ENCODE measurements at regions of chr4 and their contacts with region 1.

Region 1: GRCh38 chr4:77240469-77241066 is 83.6 kb downstream of the CCNG2 start:
- DNase-seq: no peak
- H3K4me3 ChIP-seq: no peak overlapping the region
- H3K27me3 ChIP-seq: peaks cover 1% of the 10 kb centered on the region
- CTCF ChIP-seq: peak; percentile 79

Region 2: GRCh38 chr4:76677571-76678326 is 562.8 kb before region 1 on chr4:
- CTCF ChIA-PET with region 1: no interaction called
- POLR2A ChIA-PET with region 1: no interaction called
- DNase-seq: no peak
- H3K4me3 ChIP-seq: no peak overlapping the region
- H3K27me3 ChIP-seq: no peaks in the 10 kb centered on the region
- CTCF ChIP-seq: no peak

Region 3: DNA sequence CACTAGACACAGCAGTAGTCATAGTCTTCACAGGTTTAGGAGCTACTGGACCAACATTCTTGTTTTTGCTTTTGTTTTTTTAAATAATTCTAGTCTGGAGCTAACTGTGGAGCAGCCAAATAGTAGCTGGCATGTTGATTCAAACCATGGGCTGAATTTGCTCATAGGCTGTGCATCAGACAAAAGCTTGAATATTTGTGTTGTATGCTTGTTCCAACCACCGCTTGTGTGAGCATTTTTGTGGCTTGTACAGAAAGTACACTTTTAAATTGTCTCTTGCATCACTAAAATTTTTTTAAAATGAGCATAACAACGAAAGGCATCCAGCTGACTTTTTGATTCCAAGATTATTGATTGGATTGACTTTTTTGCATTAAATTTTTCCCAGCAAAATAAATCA is 204.4 kb before region 1 on chr4:
- CTCF ChIA-PET with region 1: no interaction called
- POLR2A ChIA-PET with region 1: no interaction called
- DNase-seq: peak; percentile 89
- H3K4me3 ChIP-seq: no peak overlapping the region
- H3K27me3 ChIP-seq: no peaks in the 10 kb centered on the region
- CTCF ChIP-seq: no peak

Region 4: GRCh38 chr4:77156533-77156911 is 84.0 kb before region 1 on chr4:
- CTCF ChIA-PET with region 1: no interaction called
- POLR2A ChIA-PET with region 1: no interaction called
- DNase-seq: peak; percentile 96
- H3K4me3 ChIP-seq: peak overlapping the region; percentile 100
- H3K27me3 ChIP-seq: peaks cover 4% of the 10 kb centered on the region
- CTCF ChIP-seq: no peak

Region 5: DNA sequence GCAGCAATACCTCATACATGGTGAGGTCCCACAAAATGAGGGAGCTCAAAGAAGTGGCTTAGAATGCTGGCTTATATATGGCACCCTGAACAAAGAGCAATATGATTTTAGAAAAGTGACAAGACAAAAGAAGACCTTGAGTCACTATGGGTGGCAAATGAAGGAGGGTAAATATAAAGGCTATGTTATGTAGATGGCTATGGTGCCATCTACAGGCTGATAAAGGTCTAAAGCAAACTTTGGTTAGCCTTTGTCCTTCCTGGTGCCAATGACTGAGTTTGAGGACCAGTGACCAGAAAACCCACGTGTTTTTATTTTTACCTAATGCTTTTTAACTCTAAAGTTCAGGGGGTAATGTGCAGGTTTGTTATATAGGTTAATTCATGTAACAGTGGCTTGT is 68.3 kb after region 1 on chr4:
- CTCF ChIA-PET with region 1: interaction called, 25 read pairs
- POLR2A ChIA-PET with region 1: no interaction called
- DNase-seq: no peak
- H3K4me3 ChIP-seq: no peak overlapping the region
- H3K27me3 ChIP-seq: peaks cover 2% of the 10 kb centered on the region; the same call in 1 of the 2 replicates
- CTCF ChIP-seq: peak; percentile 50

Region 6: DNA sequence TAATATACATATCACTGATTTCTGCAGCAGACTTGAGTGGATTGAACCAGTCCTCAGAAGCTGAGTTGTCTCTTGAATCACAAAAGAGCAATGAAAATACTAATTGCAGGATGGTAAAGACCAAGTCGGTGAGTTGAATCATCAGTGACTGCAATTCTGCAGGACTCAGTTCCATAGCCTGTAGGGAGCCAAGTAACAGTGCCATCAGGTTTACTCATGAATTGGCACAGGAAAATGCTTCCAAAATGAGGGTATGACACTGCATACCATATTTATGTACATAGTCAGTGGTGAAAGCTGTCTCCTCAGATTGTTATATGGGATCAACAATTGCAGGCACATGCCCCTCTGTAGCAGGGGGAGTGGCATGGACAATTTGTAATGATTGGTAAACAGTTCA is 109.2 kb after region 1 on chr4:
- CTCF ChIA-PET with region 1: interaction called, 14 read pairs
- POLR2A ChIA-PET with region 1: no interaction called
- DNase-seq: no peak
- H3K4me3 ChIP-seq: no peak overlapping the region
- H3K27me3 ChIP-seq: no peaks in the 10 kb centered on the region
- CTCF ChIP-seq: no peak

Region 7: GRCh38 chr4:77358315-77358928 is 117.9 kb after region 1 on chr4:
- CTCF ChIA-PET with region 1: interaction called, 164 read pairs
- POLR2A ChIA-PET with region 1: interaction called, 4 read pairs
- DNase-seq: no peak
- H3K4me3 ChIP-seq: no peak overlapping the region
- H3K27me3 ChIP-seq: peaks cover 4% of the 10 kb centered on the region
- CTCF ChIP-seq: peak; percentile 69

Region 8: DNA sequence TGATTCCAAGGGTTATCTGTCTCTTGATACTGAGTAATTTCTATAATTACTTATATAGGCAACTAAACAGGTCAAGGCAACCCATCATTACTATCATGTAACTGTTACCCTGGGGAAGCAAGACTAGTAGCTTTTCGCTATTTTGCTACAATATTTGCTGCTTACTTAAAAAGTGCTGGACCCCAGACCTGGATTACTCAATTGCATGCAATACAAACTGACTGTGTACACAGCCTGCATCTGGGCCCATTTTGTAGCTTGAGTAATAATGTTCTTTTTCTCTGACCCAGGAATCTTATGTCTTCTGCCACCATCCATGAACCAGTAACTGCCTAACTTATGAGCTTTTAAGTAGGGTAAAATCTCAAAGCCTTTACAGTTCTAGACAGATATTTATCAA is 525.2 kb after region 1 on chr4:
- CTCF ChIA-PET with region 1: no interaction called
- POLR2A ChIA-PET with region 1: no interaction called
- DNase-seq: no peak
- H3K4me3 ChIP-seq: no peak overlapping the region
- H3K27me3 ChIP-seq: no peaks in the 10 kb centered on the region
- CTCF ChIP-seq: no peak

Measured in BJ (cell line).